PC-3 (cell line): ENCODE measurements at regions of chr16 and their contacts with region 1.

Region 1: DNA sequence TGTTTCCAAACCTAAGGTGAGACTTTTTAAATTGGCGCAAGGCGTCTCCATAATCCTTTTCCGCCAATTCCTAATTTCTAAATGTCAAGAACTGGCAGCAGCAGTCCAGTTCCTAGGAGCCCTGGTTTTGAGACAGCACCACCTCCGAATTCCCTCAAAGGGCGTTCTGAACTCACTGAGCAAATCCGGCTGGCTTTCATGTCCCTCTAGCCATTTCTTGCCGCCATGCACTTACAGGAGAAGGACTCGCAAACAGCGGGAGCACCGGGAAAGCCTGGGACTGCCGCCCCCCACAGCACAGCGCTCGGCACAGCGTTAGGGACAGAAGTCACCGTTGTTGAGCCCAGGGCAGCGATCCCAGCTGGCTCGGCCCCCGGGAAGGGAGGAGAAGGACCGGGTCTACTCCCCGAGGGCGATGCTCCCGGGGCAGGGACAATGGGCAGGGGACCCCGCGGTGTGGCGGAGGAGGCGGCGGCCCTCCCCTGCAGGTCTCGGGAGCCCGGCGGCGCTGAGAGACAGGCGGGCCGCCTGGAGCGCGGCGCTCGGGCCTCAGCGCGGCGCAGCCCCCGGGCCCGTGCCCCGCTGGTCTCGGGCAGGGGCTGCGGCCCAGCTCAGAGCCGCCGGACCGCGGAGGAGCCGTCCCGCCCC is 545 bp downstream of the ARHGAP17 start:
- DNase-seq: peak; percentile 39
- ATAC-seq: peak; percentile 37
- H3K4me3 ChIP-seq: peak overlapping the region; percentile 99
- H3K27ac ChIP-seq: peak overlapping the region; percentile 99
- H3K4me1 ChIP-seq: peaks cover 42% of the 10 kb centered on the region
- H3K27me3 ChIP-seq: no peaks in the 10 kb centered on the region
- CTCF ChIP-seq: no peak

Region 2: DNA sequence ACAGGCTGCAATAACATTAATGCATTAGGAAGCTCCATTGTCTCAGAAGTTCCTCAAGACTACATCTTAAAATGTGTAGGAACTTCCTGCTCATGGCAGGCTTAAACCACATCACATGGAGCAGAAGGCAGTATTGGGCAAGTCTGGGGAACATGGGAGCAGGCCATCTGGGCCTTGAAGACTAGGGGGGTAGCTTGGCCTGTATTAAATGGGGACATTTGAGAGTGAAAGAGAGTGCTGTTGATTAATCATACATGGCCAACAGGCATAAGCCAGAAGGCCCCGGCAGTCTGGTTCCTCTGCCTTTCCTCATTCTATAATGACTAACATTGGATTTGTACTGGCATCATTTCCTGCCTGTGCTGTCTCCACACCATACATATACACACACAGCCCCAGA is 194.1 kb before region 1 on chr16:
- CTCF ChIA-PET with region 1: no interaction called
- POLR2A ChIA-PET with region 1: no interaction called
- intact Hi-C with region 1: no loop called
- DNase-seq: no peak
- ATAC-seq: no peak
- H3K4me3 ChIP-seq: no peak overlapping the region
- H3K27ac ChIP-seq: no peak overlapping the region
- H3K4me1 ChIP-seq: no peaks in the 10 kb centered on the region
- H3K27me3 ChIP-seq: no peaks in the 10 kb centered on the region
- CTCF ChIP-seq: no peak

Region 3: GRCh38 chr16:24834459-24835335 is 179.9 kb before region 1 on chr16:
- CTCF ChIA-PET with region 1: no interaction called
- POLR2A ChIA-PET with region 1: no interaction called
- intact Hi-C with region 1: loop called (anchors 10 kb)
- DNase-seq: peak; percentile 63
- ATAC-seq: peak; percentile 93
- H3K4me3 ChIP-seq: no peak overlapping the region
- H3K27ac ChIP-seq: no peak overlapping the region
- H3K4me1 ChIP-seq: peaks cover 14% of the 10 kb centered on the region
- H3K27me3 ChIP-seq: no peaks in the 10 kb centered on the region
- CTCF ChIP-seq: peak; percentile 72

Region 4: GRCh38 chr16:24988593-24989338 is 25.9 kb before region 1 on chr16:
- CTCF ChIA-PET with region 1: no interaction called
- POLR2A ChIA-PET with region 1: no interaction called
- intact Hi-C with region 1: loop called (anchors 2 kb)
- DNase-seq: peak; percentile 92
- ATAC-seq: peak; percentile 81
- H3K4me3 ChIP-seq: peak overlapping the region; percentile 52
- H3K27ac ChIP-seq: peak overlapping the region; percentile 98
- H3K4me1 ChIP-seq: peaks cover 53% of the 10 kb centered on the region
- H3K27me3 ChIP-seq: no peaks in the 10 kb centered on the region
- CTCF ChIP-seq: no peak

Region 5: DNA sequence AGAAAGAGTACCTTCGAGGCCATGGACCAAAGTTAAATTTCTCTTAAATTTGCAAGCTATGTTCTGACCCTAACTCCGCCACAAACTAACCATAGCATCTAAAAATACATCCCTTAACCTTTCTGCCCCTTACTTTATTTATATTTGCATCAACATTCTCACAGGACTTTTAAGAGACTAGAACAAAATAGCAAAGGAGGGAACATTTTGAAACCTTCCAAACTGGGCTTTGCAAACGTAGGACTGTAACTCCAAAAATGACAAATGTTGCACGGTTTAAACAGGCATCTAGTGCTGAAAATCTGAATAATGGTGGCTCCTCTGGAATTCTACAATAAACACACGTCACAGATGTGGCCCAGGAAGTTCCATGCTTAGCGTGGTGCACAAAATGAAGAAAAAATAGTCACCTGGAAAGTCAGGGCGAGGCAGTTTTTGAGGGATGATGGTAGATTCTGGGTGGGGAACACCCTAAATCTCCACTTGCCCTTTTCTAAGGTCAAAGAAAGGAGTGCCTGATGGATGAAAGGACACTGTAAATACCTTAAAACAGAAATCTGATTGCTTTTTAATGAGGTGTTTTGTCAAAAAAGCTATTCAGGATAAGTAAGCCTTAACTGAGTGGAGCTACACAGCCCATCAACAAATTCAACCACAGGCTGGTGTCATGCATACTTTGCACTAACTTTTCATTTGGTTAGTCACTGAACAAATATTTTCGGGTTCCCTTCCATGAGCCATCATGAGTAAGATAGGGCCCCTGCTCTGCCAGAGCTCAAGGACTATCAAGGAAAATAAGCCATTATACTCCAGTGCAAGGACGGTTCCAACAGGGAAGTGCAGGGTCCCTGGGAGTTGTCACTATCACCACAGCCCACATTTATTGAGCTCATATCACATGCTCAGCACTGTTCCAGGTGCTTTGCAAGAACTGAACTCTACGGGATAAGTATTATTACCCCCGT is 20.6 kb before region 1 on chr16:
- CTCF ChIA-PET with region 1: no interaction called
- POLR2A ChIA-PET with region 1: no interaction called
- intact Hi-C with region 1: loop called (anchors 1 kb)
- DNase-seq: peak; percentile 90
- ATAC-seq: peak; percentile 97
- H3K4me3 ChIP-seq: peak overlapping the region; percentile 52
- H3K27ac ChIP-seq: peak overlapping the region; percentile 97
- H3K4me1 ChIP-seq: peaks cover 38% of the 10 kb centered on the region
- H3K27me3 ChIP-seq: no peaks in the 10 kb centered on the region
- CTCF ChIP-seq: no peak

Region 6: GRCh38 chr16:24999856-25000461 is 14.7 kb before region 1 on chr16:
- CTCF ChIA-PET with region 1: no interaction called
- POLR2A ChIA-PET with region 1: no interaction called
- intact Hi-C with region 1: loop called (anchors 1 kb)
- DNase-seq: peak; percentile 14
- ATAC-seq: peak; percentile 84
- H3K4me3 ChIP-seq: no peak overlapping the region
- H3K27ac ChIP-seq: peak overlapping the region; percentile 28
- H3K4me1 ChIP-seq: peaks cover 15% of the 10 kb centered on the region
- H3K27me3 ChIP-seq: no peaks in the 10 kb centered on the region
- CTCF ChIP-seq: no peak

Region 7: GRCh38 chr16:25177831-25178688 is 163.4 kb after region 1 on chr16:
- CTCF ChIA-PET with region 1: no interaction called
- POLR2A ChIA-PET with region 1: no interaction called
- intact Hi-C with region 1: no loop called
- DNase-seq: no peak
- ATAC-seq: no peak
- H3K4me3 ChIP-seq: no peak overlapping the region
- H3K27ac ChIP-seq: no peak overlapping the region
- H3K4me1 ChIP-seq: no peaks in the 10 kb centered on the region
- H3K27me3 ChIP-seq: no peaks in the 10 kb centered on the region
- CTCF ChIP-seq: no peak

Region 8: DNA sequence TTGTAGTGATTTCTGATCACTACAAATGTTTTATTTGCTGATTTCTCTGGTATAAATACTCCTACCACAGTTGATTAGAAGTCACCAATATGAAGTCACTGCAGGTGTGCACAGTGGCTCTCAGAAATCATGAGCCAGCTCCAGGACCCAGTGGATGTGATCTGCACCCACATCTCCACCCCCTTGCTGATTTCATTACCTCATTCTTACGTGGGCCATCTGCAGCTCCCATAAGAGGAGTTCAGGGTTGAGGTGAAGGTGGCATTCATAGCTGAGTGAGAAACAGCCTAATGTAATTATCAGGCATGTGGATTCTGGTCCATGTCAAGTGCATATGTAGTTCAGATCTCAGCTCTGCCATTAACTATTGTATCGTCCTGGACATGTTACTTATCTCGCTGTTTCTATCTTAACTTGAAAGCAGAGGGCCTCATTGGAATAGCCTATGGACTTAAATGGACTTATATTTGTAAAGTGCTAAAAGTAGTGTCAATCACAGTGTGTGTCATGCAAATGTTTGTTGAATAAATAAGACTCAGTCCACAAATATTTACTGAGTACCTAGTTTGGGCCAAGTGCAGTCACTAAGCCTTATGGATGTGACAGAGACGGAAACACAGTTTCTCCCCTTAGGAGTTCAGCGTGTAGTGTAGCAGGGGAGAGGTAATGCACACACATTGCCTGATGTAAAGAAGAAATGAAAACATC is 283.7 kb after region 1 on chr16:
- CTCF ChIA-PET with region 1: no interaction called
- POLR2A ChIA-PET with region 1: no interaction called
- intact Hi-C with region 1: no loop called
- DNase-seq: peak; percentile 51
- ATAC-seq: peak; percentile 96
- H3K4me3 ChIP-seq: no peak overlapping the region
- H3K27ac ChIP-seq: no peak overlapping the region
- H3K4me1 ChIP-seq: peaks cover 7% of the 10 kb centered on the region
- H3K27me3 ChIP-seq: no peaks in the 10 kb centered on the region
- CTCF ChIP-seq: no peak